Activated B cell treated with CpG ODN at 0.5 μM for 24 hours (primary cell): ENCODE measurements at regions of chr1 and their contacts with region 1.

Region 1: DNA sequence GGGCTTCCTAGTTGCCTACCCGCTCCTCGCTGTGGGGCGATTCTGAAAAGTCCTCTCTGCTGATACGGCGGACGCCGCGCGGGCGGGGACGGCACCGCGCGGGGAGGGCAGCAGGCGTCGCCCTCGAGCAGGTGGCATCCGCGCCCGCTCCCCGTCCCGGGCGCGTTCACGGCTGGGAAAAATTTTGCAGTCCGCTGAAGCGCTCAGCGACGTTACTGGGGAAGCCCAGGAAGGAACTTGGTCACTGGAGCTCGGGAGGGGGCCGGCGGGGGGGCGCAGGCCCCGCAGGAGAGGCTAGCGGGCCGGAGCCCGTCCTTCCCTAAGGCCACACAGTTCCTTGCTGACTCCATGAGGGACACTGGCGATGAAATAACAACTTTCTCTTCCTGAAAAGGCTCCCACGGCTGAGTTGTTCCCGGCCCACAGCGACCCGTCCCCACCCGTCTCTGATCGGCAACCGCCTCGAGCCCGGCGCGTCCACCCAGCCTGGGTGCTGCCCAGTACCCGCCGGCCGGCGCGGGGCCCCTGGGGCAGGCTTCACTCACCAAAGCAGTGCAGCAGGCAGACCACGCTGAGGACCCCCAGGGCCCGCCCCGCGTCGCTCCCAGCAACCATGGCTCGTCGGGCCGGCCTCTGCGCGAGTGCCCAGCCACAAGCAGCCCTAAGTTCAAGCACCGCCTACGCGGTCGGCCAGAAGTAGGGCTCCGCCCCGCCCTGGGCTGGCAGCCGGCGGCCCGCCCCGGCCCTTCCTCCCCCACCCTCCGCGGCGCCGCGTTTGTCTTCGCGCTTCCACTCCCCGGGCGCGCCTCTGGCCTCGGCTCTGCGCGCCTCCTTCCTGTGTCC is at the start of gene CD58:
- DNase-seq: peak; percentile 84
- ATAC-seq: peak; percentile 86
- H3K4me3 Mint-ChIP-seq: peak within 1 kb of the TSS; percentile 99
- H3K27ac Mint-ChIP-seq: peak within 1 kb of the TSS; percentile 95
- H3K4me1 Mint-ChIP-seq: peaks cover 80% of the 10 kb centered on the region
- H3K27me3 Mint-ChIP-seq: no peaks in the 10 kb centered on the region
- CTCF ChIP-seq: no peak
- total RNA-seq, gene CD58: 146 and 160 TPM in 2 replicates

Region 2: GRCh38 chr1:114828251-114828650 is 1742.3 kb before region 1 on chr1:
- CTCF ChIA-PET with region 1: no interaction called
- POLR2A ChIA-PET with region 1: no interaction called
- intact Hi-C with region 1: no loop called
- DNase-seq: no peak
- ATAC-seq: no peak
- H3K4me3 Mint-ChIP-seq: no peak overlapping the region
- H3K27ac Mint-ChIP-seq: no peak overlapping the region
- H3K4me1 Mint-ChIP-seq: no peaks in the 10 kb centered on the region
- H3K27me3 Mint-ChIP-seq: peaks cover 5% of the 10 kb centered on the region
- CTCF ChIP-seq: no peak

Region 3: GRCh38 chr1:116151739-116152576 is 418.6 kb before region 1 on chr1:
- CTCF ChIA-PET with region 1: interaction called, 3 read pairs
- POLR2A ChIA-PET with region 1: no interaction called
- intact Hi-C with region 1: loop called (anchors 5 kb)
- DNase-seq: peak; percentile 76
- ATAC-seq: peak; percentile 98
- H3K4me3 Mint-ChIP-seq: peak overlapping the region; percentile 66
- H3K27ac Mint-ChIP-seq: peak overlapping the region; percentile 19
- H3K4me1 Mint-ChIP-seq: peaks cover 3% of the 10 kb centered on the region
- H3K27me3 Mint-ChIP-seq: peaks cover 4% of the 10 kb centered on the region
- CTCF ChIP-seq: peak; percentile 38

Region 4: DNA sequence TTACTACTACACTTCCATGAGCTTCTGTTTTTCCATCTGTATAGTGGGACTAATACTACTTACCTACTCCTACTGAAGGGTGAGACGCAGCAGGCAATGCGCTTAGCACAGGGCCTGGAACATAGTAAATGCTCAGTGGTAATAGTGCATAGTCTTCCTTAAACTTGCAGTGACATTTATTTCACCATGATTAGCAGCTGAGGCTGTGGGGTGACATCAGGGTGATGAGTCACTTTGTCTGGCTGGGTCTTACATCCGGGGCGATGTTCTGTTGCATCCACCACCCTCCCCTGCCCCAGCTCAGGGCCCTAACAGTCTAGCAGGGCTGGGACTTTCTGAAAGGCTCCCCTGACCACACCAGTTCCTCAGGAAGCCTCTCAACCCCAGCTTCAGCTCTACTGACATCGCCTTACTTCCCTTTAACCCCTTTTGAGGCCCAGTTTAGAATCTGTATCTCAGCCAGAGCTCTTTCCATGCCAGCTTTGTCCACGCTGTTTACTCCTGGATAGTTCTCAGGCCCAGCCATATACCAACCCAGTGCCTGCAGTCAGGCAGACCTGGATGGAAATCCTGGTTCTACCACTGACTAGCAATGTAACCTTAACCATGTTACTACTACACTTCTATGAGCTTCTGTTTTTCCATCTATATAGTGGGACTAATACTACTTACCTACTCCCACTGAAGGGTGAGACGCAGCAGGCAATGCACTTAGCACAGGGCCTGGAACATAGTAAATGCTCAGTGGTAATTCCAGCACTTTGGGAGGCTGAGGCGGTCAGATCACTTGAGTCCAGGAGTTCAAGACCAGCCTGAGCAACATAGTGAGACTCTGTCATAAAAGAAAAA is 66.0 kb before region 1 on chr1:
- CTCF ChIA-PET with region 1: interaction called, 9 read pairs
- POLR2A ChIA-PET with region 1: interaction called, 47 read pairs
- intact Hi-C with region 1: loop called (anchors 1 kb)
- DNase-seq: peak; percentile 64
- ATAC-seq: peak; percentile 95
- H3K4me3 Mint-ChIP-seq: peak overlapping the region; percentile 53
- H3K27ac Mint-ChIP-seq: peak overlapping the region; percentile 83
- H3K4me1 Mint-ChIP-seq: peaks cover 63% of the 10 kb centered on the region
- H3K27me3 Mint-ChIP-seq: no peaks in the 10 kb centered on the region
- CTCF ChIP-seq: no peak

Region 5: GRCh38 chr1:116556289-116557006 is 14.1 kb before region 1 on chr1:
- CTCF ChIA-PET with region 1: interaction called, 10 read pairs
- POLR2A ChIA-PET with region 1: interaction called, 257 read pairs
- intact Hi-C with region 1: loop called (anchors 1 kb)
- DNase-seq: no peak
- ATAC-seq: peak; percentile 76
- H3K4me3 Mint-ChIP-seq: peak overlapping the region; percentile 65
- H3K27ac Mint-ChIP-seq: peak overlapping the region; percentile 99
- H3K4me1 Mint-ChIP-seq: peaks cover 90% of the 10 kb centered on the region
- H3K27me3 Mint-ChIP-seq: no peaks in the 10 kb centered on the region
- CTCF ChIP-seq: no peak

Region 6: GRCh38 chr1:116724765-116725375 is 154.3 kb after region 1 on chr1:
- CTCF ChIA-PET with region 1: interaction called, 5 read pairs
- POLR2A ChIA-PET with region 1: no interaction called
- intact Hi-C with region 1: loop called (anchors 2 kb)
- DNase-seq: no peak
- ATAC-seq: peak; percentile 54
- H3K4me3 Mint-ChIP-seq: no peak overlapping the region
- H3K27ac Mint-ChIP-seq: no peak overlapping the region
- H3K4me1 Mint-ChIP-seq: peaks cover 6% of the 10 kb centered on the region
- H3K27me3 Mint-ChIP-seq: no peaks in the 10 kb centered on the region
- CTCF ChIP-seq: peak; percentile 60

Region 7: GRCh38 chr1:117059678-117060440 is 489.3 kb after region 1 on chr1 and contains the start of gene TTF2:
- CTCF ChIA-PET with region 1: interaction called, 15 read pairs
- POLR2A ChIA-PET with region 1: interaction called, 11 read pairs
- intact Hi-C with region 1: loop called (anchors 1 kb)
- DNase-seq: peak; percentile 80
- ATAC-seq: peak; percentile 97
- H3K4me3 Mint-ChIP-seq: no peak within 1 kb of the TSS
- H3K27ac Mint-ChIP-seq: no peak within 1 kb of the TSS
- H3K4me1 Mint-ChIP-seq: peaks cover 26% of the 10 kb centered on the region
- H3K27me3 Mint-ChIP-seq: no peaks in the 10 kb centered on the region
- CTCF ChIP-seq: no peak
- total RNA-seq, gene TTF2: 33.4 and 37.7 TPM in 2 replicates